ENCODE measurements at regions of chr3 and their contacts with region 1.

Region 1: GRCh38 chr3:45210308-45211041 is 15.6 kb downstream of the TMEM158 start:
- H3K4me3 Mint-ChIP-seq: no peak overlapping the region
- H3K27ac Mint-ChIP-seq: no peak overlapping the region
- H3K4me1 Mint-ChIP-seq: peaks cover 15% of the 10 kb centered on the region
- H3K27me3 Mint-ChIP-seq: peaks cover 5% of the 10 kb centered on the region

Region 2: DNA sequence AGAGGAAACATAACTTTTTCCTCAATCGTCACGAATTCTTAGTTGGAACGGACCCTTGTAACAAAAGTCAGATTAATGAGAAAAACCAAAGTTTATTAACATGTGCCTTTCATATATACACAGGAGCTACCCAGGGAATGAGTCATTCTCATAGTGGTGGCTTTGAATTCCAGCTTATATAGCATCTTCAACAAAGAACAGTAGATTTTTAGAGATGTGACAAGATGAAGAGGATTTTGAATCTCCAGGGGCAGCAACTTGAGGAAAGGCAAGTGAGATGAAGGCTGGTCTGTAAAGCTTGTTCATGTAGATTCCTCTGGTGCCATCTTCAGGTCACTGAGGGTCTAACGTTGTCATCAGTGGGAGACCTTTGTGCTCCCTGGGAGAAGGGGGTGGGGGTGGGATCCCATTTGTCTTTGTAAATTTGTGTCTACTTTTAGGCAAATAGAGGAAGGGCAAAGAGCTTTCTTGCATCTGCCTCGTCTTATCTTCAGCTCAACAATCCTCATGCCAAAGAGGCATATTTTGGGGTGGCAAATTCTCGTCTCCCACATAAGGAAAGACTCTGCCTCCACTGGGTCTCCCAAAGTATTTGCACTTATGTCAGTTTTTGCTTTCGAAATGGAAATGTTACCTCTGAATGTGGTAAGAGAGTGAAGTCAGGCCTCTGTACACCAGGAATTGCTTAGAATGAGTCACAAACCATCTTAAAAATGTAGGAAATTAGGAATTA is 154.9 kb before region 1 on chr3:
- intact Hi-C with region 1: loop called (anchors 5 kb)
- H3K4me3 Mint-ChIP-seq: no peak overlapping the region
- H3K27ac Mint-ChIP-seq: peak overlapping the region; percentile 20
- H3K4me1 Mint-ChIP-seq: peaks cover 61% of the 10 kb centered on the region
- H3K27me3 Mint-ChIP-seq: peaks cover 1% of the 10 kb centered on the region

Region 3: DNA sequence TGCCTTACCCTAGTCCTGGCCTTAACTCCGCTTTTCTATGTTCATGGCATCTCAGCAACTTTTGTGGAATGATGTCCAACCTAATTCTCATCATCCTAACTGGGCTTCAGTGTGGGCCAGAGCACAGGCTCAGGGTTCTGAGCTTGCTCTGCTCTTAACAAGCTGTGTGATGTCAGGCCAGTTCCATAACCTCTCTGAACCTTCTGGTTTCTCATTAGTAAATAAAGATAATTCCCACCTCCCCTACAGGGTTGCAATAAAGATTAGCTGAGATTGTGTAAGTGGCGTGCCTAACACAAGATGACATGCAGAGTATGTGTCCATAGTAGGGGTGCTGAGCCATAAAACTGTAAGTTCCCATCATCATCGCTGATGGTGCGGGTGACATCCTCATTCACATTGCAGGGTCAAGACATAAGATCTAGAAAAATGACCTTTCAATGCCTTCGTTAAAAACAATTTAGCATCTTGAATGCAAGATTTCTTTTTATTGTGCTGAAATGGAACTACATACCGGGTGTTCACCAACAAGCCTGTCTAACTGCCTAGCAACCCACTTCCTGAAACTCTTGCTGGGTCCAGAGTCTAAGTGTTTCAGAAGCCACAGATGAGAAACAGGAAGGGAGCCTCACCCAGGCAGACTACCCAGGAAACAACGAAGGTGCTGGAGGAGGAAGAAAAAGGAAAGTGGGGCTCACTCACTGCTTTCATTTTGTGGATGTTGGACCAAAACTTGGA is 100.5 kb before region 1 on chr3:
- intact Hi-C with region 1: no loop called
- H3K4me3 Mint-ChIP-seq: peak overlapping the region; percentile 52
- H3K27ac Mint-ChIP-seq: peak overlapping the region; percentile 82
- H3K4me1 Mint-ChIP-seq: peaks cover 57% of the 10 kb centered on the region
- H3K27me3 Mint-ChIP-seq: no peaks in the 10 kb centered on the region

Region 4: DNA sequence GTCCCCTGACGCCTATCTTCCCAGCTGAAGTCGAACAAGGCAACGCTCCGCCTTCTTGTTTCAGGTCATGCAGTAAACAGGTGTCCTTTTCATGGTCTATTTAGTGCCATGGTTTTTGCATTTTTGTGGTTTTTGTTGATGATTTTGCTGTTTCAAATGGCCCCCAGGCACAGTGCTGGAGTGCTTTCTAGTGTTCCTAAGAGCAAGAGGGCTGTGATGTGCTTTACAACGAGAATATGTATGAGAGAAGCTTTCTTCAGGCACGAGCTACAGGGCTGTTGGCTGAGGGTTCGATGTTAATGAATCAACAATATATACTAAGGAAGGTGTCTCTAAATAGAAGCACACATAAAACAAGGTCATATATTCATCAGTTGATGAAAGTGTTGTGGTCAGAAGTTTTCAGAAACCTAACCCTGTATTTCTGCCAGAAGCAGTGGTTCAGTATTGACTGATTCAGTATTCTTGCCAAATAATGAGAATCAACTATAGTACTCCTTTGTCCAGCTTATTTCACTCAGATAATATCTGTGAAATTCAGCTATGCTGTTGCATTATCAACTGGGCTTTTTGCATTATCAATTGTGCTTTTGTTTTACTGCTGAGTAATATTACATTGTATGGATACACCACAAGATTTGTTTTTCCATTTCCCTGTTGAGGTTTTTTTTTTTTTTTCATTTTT is 402.6 kb after region 1 on chr3:
- intact Hi-C with region 1: no loop called
- H3K4me3 Mint-ChIP-seq: no peak overlapping the region
- H3K27ac Mint-ChIP-seq: no peak overlapping the region
- H3K4me1 Mint-ChIP-seq: peaks cover 54% of the 10 kb centered on the region
- H3K27me3 Mint-ChIP-seq: no peaks in the 10 kb centered on the region

Measured in dendritic cell treated with granulocyte-macrophage colony-stimulating factor and Interleukin-4, amounts not matched to agents 40 ng/mL and 50 ng/mL, for 4 days (primary cell).